CD4-positive, alpha-beta memory T cell (primary cell): ENCODE measurements at regions of chr15 and their contacts with region 1.

Region 1: DNA sequence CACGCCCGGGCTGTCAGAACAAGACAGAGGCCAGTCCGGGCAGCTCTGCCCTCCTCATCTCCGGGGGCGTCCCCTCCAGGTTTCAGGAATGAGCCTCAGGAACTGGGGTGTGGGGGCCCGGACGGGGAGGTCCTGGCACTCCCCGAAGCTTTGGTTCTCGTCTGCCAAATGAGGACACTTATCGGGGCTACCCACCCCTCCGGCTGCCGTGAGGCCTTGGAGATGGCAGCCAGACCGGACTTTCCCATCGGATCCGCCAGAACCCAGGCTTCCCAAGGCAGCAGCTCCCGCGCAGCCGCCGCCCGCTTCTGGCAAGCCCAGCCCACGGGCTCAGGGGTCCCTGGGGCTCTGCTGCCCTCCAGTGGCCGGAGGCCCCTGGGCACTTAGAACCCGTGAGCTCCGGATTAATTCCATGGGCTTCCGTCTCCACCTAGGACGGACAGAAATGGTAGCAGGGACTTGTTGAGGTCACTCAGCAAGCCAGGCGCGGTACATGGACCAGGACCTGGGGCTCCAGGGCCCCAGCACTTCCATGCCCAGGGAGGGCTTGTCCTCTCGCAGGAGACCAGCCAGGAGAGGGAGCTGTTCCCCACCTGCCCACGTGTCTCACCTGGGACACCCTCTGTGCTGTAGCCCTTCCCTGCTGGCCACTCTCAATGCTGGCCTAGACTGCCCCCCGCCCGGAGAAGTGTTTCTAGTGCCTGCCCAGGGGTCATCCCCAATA is 89.4 kb downstream of the LINGO1 start:
- DNase-seq: peak; percentile 66 to 70 (median 69)
- H3K4me3 ChIP-seq: peak overlapping the region; percentile 42 to 55
- H3K4me3 Mint-ChIP-seq: peak overlapping the region; percentile 73 to 87 (median 80)
- H3K27ac ChIP-seq: peak overlapping the region; percentile 26
- H3K27ac Mint-ChIP-seq: peak overlapping the region in 3 of 7 donors; percentile 22 to 60 (median 55)
- H3K4me1 ChIP-seq: peaks cover 12% of the 10 kb centered on the region
- H3K4me1 Mint-ChIP-seq: peaks cover 2 to 12% (median 4%) of the 10 kb centered on the region in 4 donors
- H3K27me3 ChIP-seq: no peaks in the 10 kb centered on the region
- H3K27me3 Mint-ChIP-seq: no peaks in the 10 kb centered on the region

Region 2: GRCh38 chr15:76190834-76191538 is 1352.3 kb before region 1 on chr15:
- CTCF ChIA-PET with region 1: interaction called, 5 read pairs
- POLR2A ChIA-PET with region 1: no interaction called
- intact Hi-C with region 1: loop called (anchors 2 kb)
- DNase-seq: peak; percentile 49 to 58 (median 54)
- H3K4me3 ChIP-seq: peak overlapping the region in 1 of 2 donors; percentile 1
- H3K4me3 Mint-ChIP-seq: peak overlapping the region; percentile 35 to 74 (median 67)
- H3K27ac ChIP-seq: no peak overlapping the region
- H3K27ac Mint-ChIP-seq: peak overlapping the region in 3 of 7 donors; percentile 24 to 85 (median 44)
- H3K4me1 ChIP-seq: peaks cover 8% of the 10 kb centered on the region
- H3K4me1 Mint-ChIP-seq: peaks cover 8 to 14% (median 9%) of the 10 kb centered on the region in 4 donors
- H3K27me3 ChIP-seq: no peaks in the 10 kb centered on the region
- H3K27me3 Mint-ChIP-seq: peaks cover 10 to 18% of the 10 kb centered on the region in 2 donors

Region 3: GRCh38 chr15:77107531-77108355 is 435.6 kb before region 1 on chr15:
- CTCF ChIA-PET with region 1: interaction called, 14 read pairs
- POLR2A ChIA-PET with region 1: no interaction called
- intact Hi-C with region 1: loop called (anchors 1 kb)
- DNase-seq: peak in 4 of 5 donors; percentile 6 to 17 (median 7)
- H3K4me3 ChIP-seq: no peak overlapping the region
- H3K4me3 Mint-ChIP-seq: no peak overlapping the region
- H3K27ac ChIP-seq: no peak overlapping the region
- H3K27ac Mint-ChIP-seq: peak overlapping the region in 2 of 7 donors; percentile 3 to 41
- H3K4me1 ChIP-seq: no peaks in the 10 kb centered on the region
- H3K4me1 Mint-ChIP-seq: no peaks in the 10 kb centered on the region
- H3K27me3 ChIP-seq: no peaks in the 10 kb centered on the region
- H3K27me3 Mint-ChIP-seq: no peaks in the 10 kb centered on the region

Region 4: DNA sequence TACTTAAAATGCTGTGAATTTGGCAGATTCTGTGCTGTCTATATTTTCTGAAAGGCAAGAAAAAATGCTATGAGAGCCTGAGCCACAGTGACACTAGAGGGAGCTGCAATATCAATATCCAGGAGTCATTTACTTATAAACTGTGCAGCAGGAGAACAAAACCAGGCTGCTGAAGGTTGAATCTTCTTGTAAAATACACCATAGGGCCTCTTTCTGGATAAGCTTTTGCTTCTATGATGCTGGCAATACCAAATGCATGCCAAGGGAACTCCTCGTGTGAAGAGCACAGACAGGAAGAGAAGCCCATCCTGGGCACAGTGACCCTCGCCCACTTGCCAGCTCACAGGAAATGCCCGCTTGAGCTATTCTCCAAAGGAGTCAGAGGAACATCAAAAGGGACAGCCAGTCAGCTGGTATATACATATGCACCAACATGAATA is 424.4 kb before region 1 on chr15:
- CTCF ChIA-PET with region 1: interaction called, 45 read pairs
- POLR2A ChIA-PET with region 1: interaction called, 3 read pairs
- intact Hi-C with region 1: loop called (anchors 2 kb)
- DNase-seq: peak in 4 of 5 donors; percentile 42 to 48 (median 44)
- H3K4me3 ChIP-seq: no peak overlapping the region
- H3K4me3 Mint-ChIP-seq: no peak overlapping the region
- H3K27ac ChIP-seq: no peak overlapping the region
- H3K27ac Mint-ChIP-seq: no peak overlapping the region
- H3K4me1 ChIP-seq: no peaks in the 10 kb centered on the region
- H3K4me1 Mint-ChIP-seq: peaks cover 0 to 3% (median 2%) of the 10 kb centered on the region in 4 donors
- H3K27me3 ChIP-seq: no peaks in the 10 kb centered on the region
- H3K27me3 Mint-ChIP-seq: no peaks in the 10 kb centered on the region

Region 5: GRCh38 chr15:77496710-77497103 is 46.6 kb before region 1 on chr15:
- CTCF ChIA-PET with region 1: interaction called, 10 read pairs
- POLR2A ChIA-PET with region 1: no interaction called
- intact Hi-C with region 1: no loop called
- DNase-seq: peak; percentile 51 to 66 (median 60)
- H3K4me3 ChIP-seq: no peak overlapping the region
- H3K4me3 Mint-ChIP-seq: no peak overlapping the region
- H3K27ac ChIP-seq: no peak overlapping the region
- H3K27ac Mint-ChIP-seq: peak overlapping the region in 1 of 7 donors; percentile 31
- H3K4me1 ChIP-seq: peaks cover 9% of the 10 kb centered on the region
- H3K4me1 Mint-ChIP-seq: peaks cover 9 to 17% (median 16%) of the 10 kb centered on the region in 4 donors
- H3K27me3 ChIP-seq: no peaks in the 10 kb centered on the region
- H3K27me3 Mint-ChIP-seq: no peaks in the 10 kb centered on the region

Region 6: DNA sequence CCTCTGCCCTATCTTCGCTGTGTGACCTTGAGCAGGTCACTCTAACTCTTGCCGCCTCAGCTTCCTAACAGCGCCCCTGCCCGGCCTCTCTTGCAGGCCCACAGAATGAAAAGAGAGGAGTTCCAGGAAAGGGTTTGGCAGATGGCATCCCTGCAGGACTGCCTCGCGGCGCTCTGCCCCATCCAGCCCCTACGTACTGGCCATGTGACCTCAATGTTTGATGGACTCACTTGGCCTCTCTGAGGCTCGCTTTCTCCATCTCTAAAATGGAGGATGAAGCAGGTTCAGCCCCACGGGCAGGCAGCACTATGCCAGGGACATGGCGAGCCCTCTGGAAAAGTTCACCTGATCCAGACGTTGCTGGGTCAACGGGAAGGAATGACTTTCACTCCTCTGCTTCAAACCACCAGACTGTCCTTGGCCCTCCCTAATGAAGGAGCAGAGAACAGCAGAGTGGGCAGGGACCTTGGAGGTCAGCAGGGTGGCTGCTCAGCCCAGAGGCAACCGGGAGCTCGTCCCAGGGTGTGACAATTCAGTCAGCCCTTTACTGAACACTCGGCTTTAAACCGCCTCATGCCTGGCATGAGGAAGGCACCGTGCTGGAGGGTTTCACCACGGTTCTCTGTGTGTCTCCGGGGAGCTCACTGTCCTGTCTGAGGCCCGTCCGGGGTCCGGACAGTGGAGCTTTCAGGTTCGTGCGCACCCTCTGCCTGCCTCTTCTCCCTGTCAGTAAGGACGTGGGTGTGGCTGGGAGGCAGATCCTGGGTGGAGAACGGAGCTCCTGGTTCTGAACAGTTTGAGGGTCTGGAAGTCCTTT is 12.0 kb before region 1 on chr15:
- CTCF ChIA-PET with region 1: interaction called, 17 read pairs
- POLR2A ChIA-PET with region 1: no interaction called
- intact Hi-C with region 1: no loop called
- DNase-seq: no peak
- H3K4me3 ChIP-seq: no peak overlapping the region
- H3K4me3 Mint-ChIP-seq: no peak overlapping the region
- H3K27ac ChIP-seq: no peak overlapping the region
- H3K27ac Mint-ChIP-seq: no peak overlapping the region
- H3K4me1 ChIP-seq: no peaks in the 10 kb centered on the region
- H3K4me1 Mint-ChIP-seq: no peaks in the 10 kb centered on the region
- H3K27me3 ChIP-seq: no peaks in the 10 kb centered on the region
- H3K27me3 Mint-ChIP-seq: peaks cover 4 to 5% of the 10 kb centered on the region in 2 donors

Region 7: DNA sequence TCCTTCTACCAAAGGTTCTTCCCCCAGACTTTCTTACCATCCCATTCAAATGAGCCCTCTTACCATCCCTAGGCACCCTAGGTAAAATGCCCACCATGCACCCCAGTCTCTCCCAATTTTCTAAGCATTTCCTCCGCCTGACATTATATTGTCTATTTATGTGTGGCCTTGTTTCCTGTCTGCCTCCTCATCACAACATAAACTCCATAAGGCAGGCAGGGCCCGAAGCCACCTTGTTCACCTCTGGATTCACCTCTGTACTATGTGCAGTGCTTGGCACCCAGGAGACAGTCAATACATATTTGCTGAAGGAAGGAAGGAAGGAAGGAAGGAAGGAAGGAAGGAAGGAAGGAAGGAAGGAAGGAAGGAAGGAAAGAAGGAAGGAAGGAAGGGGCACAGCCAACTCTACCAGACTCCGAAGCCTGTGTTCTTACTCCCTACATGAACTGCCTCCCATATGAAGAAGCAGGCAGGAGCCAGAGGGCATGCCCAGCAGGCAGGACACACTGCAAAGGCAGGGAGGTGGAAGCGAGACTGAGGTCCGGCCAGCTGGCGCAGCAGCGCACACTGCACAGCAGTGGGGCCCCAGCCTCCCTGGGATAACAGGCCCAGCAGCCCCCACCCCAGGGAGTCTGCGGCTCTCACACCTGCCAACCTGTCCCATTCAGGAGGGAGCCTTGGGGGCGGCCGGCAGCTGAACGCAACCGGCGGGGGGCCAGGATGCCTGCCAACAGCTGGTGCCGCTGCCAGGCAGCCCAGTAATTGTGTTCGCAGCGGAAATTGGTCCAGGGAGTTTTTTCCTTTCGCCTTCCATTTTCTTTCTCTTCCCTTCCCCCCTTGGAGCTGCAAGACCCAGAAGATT is 195.4 kb after region 1 on chr15:
- CTCF ChIA-PET with region 1: no interaction called
- POLR2A ChIA-PET with region 1: no interaction called
- intact Hi-C with region 1: no loop called
- DNase-seq: no peak
- H3K4me3 ChIP-seq: no peak overlapping the region
- H3K4me3 Mint-ChIP-seq: no peak overlapping the region
- H3K27ac ChIP-seq: no peak overlapping the region
- H3K27ac Mint-ChIP-seq: no peak overlapping the region
- H3K4me1 ChIP-seq: no peaks in the 10 kb centered on the region
- H3K4me1 Mint-ChIP-seq: no peaks in the 10 kb centered on the region
- H3K27me3 ChIP-seq: no peaks in the 10 kb centered on the region
- H3K27me3 Mint-ChIP-seq: peaks cover 9 to 12% of the 10 kb centered on the region in 2 donors